H1 (cell line): ENCODE measurements at regions of chr2 and their contacts with region 1.

Region 1: DNA sequence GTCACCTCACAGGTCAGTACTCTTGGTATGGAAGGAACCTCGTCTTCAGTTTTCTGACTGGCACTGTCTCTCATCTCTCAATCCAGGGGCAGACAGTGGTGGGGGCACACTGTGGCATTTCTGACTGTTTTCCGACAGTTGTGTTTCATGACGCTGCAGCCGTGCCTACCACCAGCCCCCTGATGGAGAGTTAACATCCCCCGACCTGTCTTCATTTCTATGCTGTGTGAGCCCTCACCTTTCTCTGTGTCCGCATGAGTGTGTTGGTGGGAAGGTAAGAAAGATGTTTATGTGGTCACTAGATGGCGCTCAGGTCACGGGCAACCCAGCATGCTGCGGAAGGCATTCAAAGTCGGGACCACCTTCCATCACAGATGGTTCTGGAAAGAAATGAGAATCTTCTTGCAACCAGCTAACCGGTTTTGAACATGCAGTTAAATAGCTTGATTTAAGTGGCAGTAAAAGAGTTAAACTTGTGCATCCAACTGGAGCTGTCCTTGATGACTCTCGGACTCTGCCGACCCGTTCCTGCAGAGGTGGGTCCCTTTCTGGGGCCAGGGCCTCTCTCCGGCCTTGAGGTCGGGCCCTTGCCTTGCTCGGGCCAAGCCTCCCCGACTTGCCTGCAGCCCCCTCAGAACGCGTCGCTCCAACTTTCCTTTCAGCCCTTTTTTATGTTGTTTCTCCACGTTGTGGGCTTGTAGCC is 92.4 kb downstream of the DYSF start:
- DNase-seq: peak; percentile 56 to 68
- H3K4me3 ChIP-seq: no peak overlapping the region
- H3K27ac ChIP-seq: no peak overlapping the region
- H3K4me1 ChIP-seq: no peaks in the 10 kb centered on the region
- H3K27me3 ChIP-seq: no peaks in the 10 kb centered on the region
- CTCF ChIP-seq: peak; percentile 78 to 91 (median 89)
- EP300 ChIP-seq: no peak
- POLR2A ChIP-seq: no peak
- RAD21 ChIP-seq: peak; percentile 96 to 97

Region 2: GRCh38 chr2:71530641-71531332 is 14.9 kb before region 1 on chr2:
- CTCF ChIA-PET with region 1: interaction called, 76 read pairs
- POLR2A ChIA-PET with region 1: interaction called, 3 read pairs
- DNase-seq: peak; percentile 33 to 75
- H3K4me3 ChIP-seq: no peak overlapping the region
- H3K27ac ChIP-seq: no peak overlapping the region
- H3K4me1 ChIP-seq: peaks cover 0 to 11% (median 4%) of the 10 kb centered on the region in 4 experiments; a peak in 6 of 7 replicates
- H3K27me3 ChIP-seq: no peaks in the 10 kb centered on the region
- CTCF ChIP-seq: peak; percentile 54 to 87 (median 73)
- EP300 ChIP-seq: no peak
- POLR2A ChIP-seq: no peak
- RAD21 ChIP-seq: peak; percentile 81 to 91

Region 3: GRCh38 chr2:71558300-71559051 is 12.8 kb after region 1 on chr2:
- CTCF ChIA-PET with region 1: interaction called, 20 read pairs
- POLR2A ChIA-PET with region 1: no interaction called
- DNase-seq: no peak
- H3K4me3 ChIP-seq: no peak overlapping the region
- H3K27ac ChIP-seq: no peak overlapping the region
- H3K4me1 ChIP-seq: peaks cover 0 to 6% (median 0%) of the 10 kb centered on the region in 4 experiments; a peak in 3 of 7 replicates
- H3K27me3 ChIP-seq: no peaks in the 10 kb centered on the region
- CTCF ChIP-seq: no peak
- EP300 ChIP-seq: no peak
- POLR2A ChIP-seq: no peak
- RAD21 ChIP-seq: no peak

Region 4: GRCh38 chr2:71603311-71603811 is 57.6 kb after region 1 on chr2:
- CTCF ChIA-PET with region 1: interaction called, 10 read pairs
- POLR2A ChIA-PET with region 1: no interaction called
- DNase-seq: no peak
- H3K4me3 ChIP-seq: no peak overlapping the region
- H3K27ac ChIP-seq: no peak overlapping the region
- H3K4me1 ChIP-seq: peaks cover 0 to 12% (median 5%) of the 10 kb centered on the region in 4 experiments; a peak in 3 of 7 replicates
- H3K27me3 ChIP-seq: no peaks in the 10 kb centered on the region
- CTCF ChIP-seq: no peak
- EP300 ChIP-seq: no peak
- POLR2A ChIP-seq: no peak
- RAD21 ChIP-seq: no peak

Region 5: GRCh38 chr2:71784734-71785473 is 239.2 kb after region 1 on chr2:
- CTCF ChIA-PET with region 1: interaction called, 12 read pairs
- POLR2A ChIA-PET with region 1: no interaction called
- DNase-seq: peak in 1 of 2 experiments; percentile 35
- H3K4me3 ChIP-seq: no peak overlapping the region
- H3K27ac ChIP-seq: no peak overlapping the region
- H3K4me1 ChIP-seq: no peaks in the 10 kb centered on the region
- H3K27me3 ChIP-seq: no peaks in the 10 kb centered on the region
- CTCF ChIP-seq: no peak
- EP300 ChIP-seq: no peak
- POLR2A ChIP-seq: no peak
- RAD21 ChIP-seq: no peak